Kidney (tissue), 22 donors: ENCODE measurements at regions of chr5 and their contacts with region 1.

Region 1: DNA sequence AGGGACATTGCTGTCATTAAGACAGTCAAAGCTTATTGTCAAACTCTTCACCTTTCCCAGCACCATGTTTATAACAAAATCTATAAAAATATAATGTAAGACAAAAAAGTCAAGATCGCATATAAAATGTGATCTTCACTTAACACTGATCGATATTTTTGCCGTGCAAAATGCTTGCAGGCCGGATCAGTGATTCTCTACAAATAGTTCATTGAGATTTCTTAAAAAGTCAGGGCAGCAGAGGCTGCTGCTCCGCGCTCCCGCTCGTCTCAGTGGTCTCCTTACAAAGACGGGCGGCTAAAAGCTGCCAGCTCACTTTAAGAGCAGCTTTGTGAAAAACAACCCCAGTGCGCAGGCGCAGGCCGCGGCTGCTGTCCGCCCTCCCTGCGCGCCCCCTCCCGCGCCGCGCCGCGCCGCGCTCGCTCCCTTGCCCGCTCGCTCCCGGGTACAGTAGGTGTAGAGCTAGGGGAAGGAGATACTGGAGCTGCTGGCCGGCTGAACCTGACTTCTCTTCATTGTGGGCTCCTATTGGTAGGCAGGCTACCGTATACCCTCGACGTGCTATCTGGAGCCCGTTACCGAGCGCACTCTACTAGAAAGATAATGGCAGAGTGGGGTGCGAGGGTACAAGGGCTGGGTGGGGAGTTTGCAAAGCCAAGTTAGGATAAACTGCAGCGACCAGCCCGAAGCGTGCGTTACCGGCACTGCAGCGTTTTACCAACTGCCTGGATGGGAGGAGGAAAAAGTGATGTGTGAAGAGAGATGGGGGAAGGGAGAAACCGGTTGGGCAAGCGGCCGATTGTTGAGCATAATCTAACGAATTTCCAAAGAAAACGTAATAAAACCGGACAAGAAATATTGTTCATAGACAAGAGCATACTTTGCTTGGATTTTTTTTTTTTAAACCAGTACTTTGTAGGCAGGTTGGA is at the start of gene ARRDC3:
- DNase-seq: peak; percentile 98 to 99 (median 98)
- H3K4me3 ChIP-seq: peak within 1 kb of the TSS; percentile 92 to 100 (median 93)
- H3K27ac ChIP-seq: peak within 1 kb of the TSS; percentile 100
- H3K4me1 ChIP-seq: no peaks in the 10 kb centered on the region
- H3K27me3 ChIP-seq: no peaks in the 10 kb centered on the region
- CTCF ChIP-seq: peak; percentile 26
- total RNA-seq, gene ARRDC3: 124 TPM

Region 2: DNA sequence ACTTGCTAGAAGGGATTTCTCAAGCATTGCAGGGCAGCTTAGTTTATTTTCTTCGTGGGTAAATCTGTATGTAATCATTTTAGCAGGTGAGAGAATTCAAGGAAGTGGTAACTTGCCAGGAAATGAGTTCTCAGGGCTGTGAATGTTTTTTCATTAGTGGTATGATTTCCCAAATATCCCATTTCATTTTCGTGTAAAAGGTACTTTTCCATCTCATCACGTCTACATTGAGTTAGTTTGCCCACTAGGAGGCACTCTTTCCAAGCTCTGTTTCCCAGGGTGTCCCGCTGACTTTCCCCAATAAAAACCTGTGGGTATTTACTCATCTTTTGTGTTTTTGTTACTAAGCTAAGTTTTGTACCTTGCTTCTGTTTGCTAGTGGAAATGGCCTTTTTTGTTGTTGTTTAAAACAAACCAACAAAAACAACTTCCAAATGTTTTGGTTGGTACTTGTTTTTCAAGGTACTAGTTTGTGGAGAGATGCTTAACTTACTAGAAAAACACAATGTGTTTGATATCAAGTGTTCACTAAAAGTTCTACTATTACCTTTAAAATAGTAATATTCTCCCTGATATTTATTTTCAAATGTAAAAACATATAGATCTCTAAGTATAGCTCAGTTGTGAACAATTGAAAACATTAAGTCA is 451.1 kb before region 1 on chr5:
- intact Hi-C with region 1: loop called (anchors 10 kb)
- DNase-seq: peak in 3 of 5 donors; percentile 44 to 86 (median 80)
- H3K4me3 ChIP-seq: no peak overlapping the region
- H3K27ac ChIP-seq: no peak overlapping the region
- H3K4me1 ChIP-seq: peaks cover 0 to 4% (median 0%) of the 10 kb centered on the region in 3 donors
- H3K27me3 ChIP-seq: no peaks in the 10 kb centered on the region
- CTCF ChIP-seq: peak; percentile 70

Region 3: DNA sequence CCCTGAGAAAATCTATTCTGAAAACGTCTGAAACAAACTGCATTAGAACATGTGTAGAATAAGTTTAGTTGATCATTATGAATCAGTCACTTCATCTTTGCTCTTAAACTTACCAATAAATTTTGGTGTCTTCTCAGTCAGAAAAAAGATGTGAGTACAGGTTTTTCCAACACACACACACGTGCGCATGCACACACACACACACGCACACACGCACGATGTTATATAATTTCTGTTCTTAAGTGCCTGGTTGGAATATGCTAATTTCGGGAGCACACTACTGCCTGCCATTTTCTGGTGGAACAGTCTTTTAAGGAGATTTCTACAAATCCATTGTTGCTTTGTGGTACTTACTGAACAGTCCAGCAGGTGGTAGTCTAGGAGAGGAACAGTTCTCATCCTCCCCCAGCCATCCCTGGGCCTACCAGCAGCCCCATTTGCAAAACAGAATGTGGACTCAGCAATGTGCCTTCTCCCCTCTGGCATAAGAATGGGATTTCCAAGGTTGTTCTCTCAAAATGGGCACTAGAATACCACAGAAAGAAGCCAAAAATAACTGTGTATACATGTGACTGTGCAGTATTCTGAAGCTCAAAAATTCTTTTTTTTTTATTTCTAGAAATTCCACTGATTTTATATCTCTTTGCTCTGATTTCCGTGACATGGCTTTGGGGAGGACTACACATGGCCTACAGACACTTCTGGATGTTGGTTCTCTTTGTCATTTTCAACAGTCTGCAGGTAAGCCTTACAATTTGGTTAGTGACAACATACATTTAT is 281.5 kb before region 1 on chr5:
- intact Hi-C with region 1: loop called (anchors 10 kb)
- DNase-seq: peak; percentile 66 to 91 (median 77)
- H3K4me3 ChIP-seq: peak overlapping the region in 1 of 3 donors; percentile 33
- H3K27ac ChIP-seq: no peak overlapping the region
- H3K4me1 ChIP-seq: peaks cover 0 to 7% (median 2%) of the 10 kb centered on the region in 3 donors
- H3K27me3 ChIP-seq: no peaks in the 10 kb centered on the region
- CTCF ChIP-seq: peak; percentile 80